H1 (cell line): ENCODE measurements at regions of chr3 and their contacts with region 1.

Region 1: DNA sequence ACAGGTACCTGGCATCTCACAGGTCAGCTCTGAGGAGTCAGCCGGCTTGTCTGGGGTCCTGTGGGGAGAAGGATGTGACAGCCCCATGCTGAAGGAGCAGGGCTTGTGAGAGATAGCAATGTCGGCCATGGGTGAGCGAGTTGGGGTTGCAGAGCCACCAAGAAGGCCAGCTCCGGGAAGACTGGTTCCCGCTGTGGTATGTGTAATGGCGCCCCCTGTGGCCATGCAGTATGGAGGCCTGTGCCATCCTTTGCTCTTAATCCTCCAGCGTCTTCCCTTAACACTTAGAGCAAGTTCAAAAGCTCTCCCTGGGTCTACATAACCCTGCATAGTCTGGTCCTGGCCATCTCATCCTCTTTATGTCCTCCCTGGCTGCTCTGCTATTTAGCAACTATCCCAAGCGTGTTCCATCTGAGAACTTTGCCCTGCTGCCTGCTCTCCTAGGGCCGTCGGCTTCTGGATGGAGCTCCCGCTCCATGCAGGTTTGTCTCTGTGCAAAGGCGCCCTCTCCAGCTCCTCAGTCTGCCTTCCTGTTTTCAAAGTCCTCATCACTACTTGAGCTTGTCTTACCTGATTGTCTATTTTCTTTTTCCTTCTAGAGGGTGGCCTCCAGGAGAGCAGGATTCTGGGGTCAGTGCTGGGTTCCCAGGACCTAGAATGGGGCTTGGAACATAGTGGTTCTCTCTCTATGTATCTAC is 40.8 kb upstream of the IQCF6 start:
- DNase-seq: peak; percentile 43 to 87
- H3K4me3 ChIP-seq: no peak overlapping the region
- H3K27ac ChIP-seq: no peak overlapping the region
- H3K4me1 ChIP-seq: no peaks in the 10 kb centered on the region
- H3K27me3 ChIP-seq: no peaks in the 10 kb centered on the region
- CTCF ChIP-seq: peak; percentile 74 to 96 (median 86)
- EP300 ChIP-seq: no peak
- POLR2A ChIP-seq: no peak
- RAD21 ChIP-seq: peak; percentile 60 to 71

Region 2: GRCh38 chr3:51706788-51707731 is 112.8 kb before region 1 on chr3 and contains the start of gene GRM2:
- CTCF ChIA-PET with region 1: interaction called, 10 read pairs
- POLR2A ChIA-PET with region 1: no interaction called
- DNase-seq: peak; percentile 53 to 90
- H3K4me3 ChIP-seq: peak within 1 kb of the TSS; percentile 49 to 79 (median 74)
- H3K27ac ChIP-seq: no peak within 1 kb of the TSS
- H3K4me1 ChIP-seq: peaks cover 0 to 34% (median 22%) of the 10 kb centered on the region in 4 experiments; a peak in 6 of 7 replicates
- H3K27me3 ChIP-seq: peaks cover 13 to 24% (median 23%) of the 10 kb centered on the region in 4 experiments; a peak in 6 of 7 replicates
- CTCF ChIP-seq: no peak; a peak in 1 of 4 replicates
- EP300 ChIP-seq: peak in 1 of 2 experiments; percentile 37; a peak in 1 of 3 replicates
- POLR2A ChIP-seq: peak in 1 of 2 experiments; percentile 46; a peak in 1 of 3 replicates
- RAD21 ChIP-seq: peak; percentile 4 to 16; a peak in 1 of 4 replicates
- total RNA-seq, gene GRM2: 3.9 and 4.3 TPM in 2 replicates

Region 3: GRCh38 chr3:51799879-51800749 is 19.7 kb before region 1 on chr3:
- CTCF ChIA-PET with region 1: interaction called, 80 read pairs
- POLR2A ChIA-PET with region 1: no interaction called
- DNase-seq: peak in 1 of 2 experiments; percentile 52
- H3K4me3 ChIP-seq: no peak overlapping the region
- H3K27ac ChIP-seq: no peak overlapping the region
- H3K4me1 ChIP-seq: peaks cover 6 to 24% (median 20%) of the 10 kb centered on the region in 4 experiments; a peak in 6 of 7 replicates
- H3K27me3 ChIP-seq: no peaks in the 10 kb centered on the region
- CTCF ChIP-seq: peak in 2 of 3 experiments; percentile 73; a peak in 3 of 4 replicates
- EP300 ChIP-seq: no peak
- POLR2A ChIP-seq: no peak
- RAD21 ChIP-seq: peak; percentile 81 to 83

Region 4: DNA sequence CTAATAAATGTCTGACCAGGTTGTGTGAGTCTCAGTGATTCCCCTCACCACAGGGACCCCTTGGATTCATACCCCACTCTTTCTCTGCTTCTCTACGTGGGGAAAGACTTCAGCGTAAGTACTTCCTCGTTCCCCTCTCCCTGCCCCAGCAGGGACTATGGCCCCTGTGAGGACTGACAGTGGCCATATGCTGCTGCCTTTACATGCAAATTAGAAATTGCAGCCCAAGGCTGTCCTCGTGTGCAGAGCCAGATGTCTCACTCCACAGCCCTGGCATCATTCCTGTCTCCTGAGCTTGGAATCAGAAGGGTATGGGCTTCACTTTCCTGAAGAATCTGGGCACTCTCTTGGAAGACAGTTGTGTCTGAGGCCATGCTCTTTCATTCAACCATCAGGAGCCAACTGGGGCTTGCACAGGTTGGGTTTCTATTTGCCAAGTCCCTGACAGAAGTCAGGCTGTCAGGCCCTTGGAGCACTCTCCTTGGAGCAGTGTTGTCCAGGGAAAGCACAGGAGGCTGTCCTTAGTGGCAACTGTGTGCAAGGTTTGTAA is 11.1 kb after region 1 on chr3:
- CTCF ChIA-PET with region 1: interaction called, 15 read pairs
- POLR2A ChIA-PET with region 1: interaction called, 4 read pairs
- DNase-seq: no peak
- H3K4me3 ChIP-seq: no peak overlapping the region
- H3K27ac ChIP-seq: no peak overlapping the region
- H3K4me1 ChIP-seq: no peaks in the 10 kb centered on the region
- H3K27me3 ChIP-seq: no peaks in the 10 kb centered on the region; a peak in 1 of 7 replicates
- CTCF ChIP-seq: no peak
- EP300 ChIP-seq: no peak
- POLR2A ChIP-seq: no peak
- RAD21 ChIP-seq: no peak

Region 5: GRCh38 chr3:51836606-51837005 is 16.7 kb after region 1 on chr3:
- CTCF ChIA-PET with region 1: interaction called, 15 read pairs
- POLR2A ChIA-PET with region 1: no interaction called
- DNase-seq: no peak
- H3K4me3 ChIP-seq: no peak overlapping the region
- H3K27ac ChIP-seq: no peak overlapping the region
- H3K4me1 ChIP-seq: no peaks in the 10 kb centered on the region
- H3K27me3 ChIP-seq: peaks cover 0 to 1% (median 0%) of the 10 kb centered on the region in 4 experiments; a peak in 1 of 7 replicates
- CTCF ChIP-seq: no peak
- EP300 ChIP-seq: no peak
- POLR2A ChIP-seq: no peak
- RAD21 ChIP-seq: no peak

Region 6: GRCh38 chr3:51845129-51845528 is 25.3 kb after region 1 on chr3:
- CTCF ChIA-PET with region 1: interaction called, 18 read pairs
- POLR2A ChIA-PET with region 1: no interaction called
- DNase-seq: peak in 1 of 2 experiments; percentile 34
- H3K4me3 ChIP-seq: no peak overlapping the region
- H3K27ac ChIP-seq: no peak overlapping the region
- H3K4me1 ChIP-seq: peaks cover 0 to 3% (median 0%) of the 10 kb centered on the region in 4 experiments; a peak in 3 of 7 replicates
- H3K27me3 ChIP-seq: no peaks in the 10 kb centered on the region
- CTCF ChIP-seq: no peak
- EP300 ChIP-seq: no peak
- POLR2A ChIP-seq: no peak
- RAD21 ChIP-seq: peak in 1 of 2 experiments; percentile 1; a peak in 1 of 4 replicates

Region 7: GRCh38 chr3:51967384-51968169 is 147.7 kb after region 1 on chr3 and contains the start of gene PCBP4:
- CTCF ChIA-PET with region 1: no interaction called
- POLR2A ChIA-PET with region 1: no interaction called
- DNase-seq: peak in 1 of 2 experiments; percentile 77
- H3K4me3 ChIP-seq: peak within 1 kb of the TSS; percentile 57 to 90 (median 73)
- H3K27ac ChIP-seq: peak within 1 kb of the TSS; percentile 54
- H3K4me1 ChIP-seq: peaks cover 12 to 42% (median 33%) of the 10 kb centered on the region in 4 experiments
- H3K27me3 ChIP-seq: peaks cover 0 to 13% (median 2%) of the 10 kb centered on the region in 4 experiments; a peak in 5 of 7 replicates
- CTCF ChIP-seq: no peak
- EP300 ChIP-seq: no peak
- POLR2A ChIP-seq: no peak
- RAD21 ChIP-seq: no peak
- total RNA-seq, gene PCBP4: 16.4 and 19.6 TPM in 2 replicates

Region 8: GRCh38 chr3:52181543-52181942 is 361.7 kb after region 1 on chr3:
- CTCF ChIA-PET with region 1: no interaction called
- POLR2A ChIA-PET with region 1: no interaction called
- DNase-seq: no peak
- H3K4me3 ChIP-seq: no peak overlapping the region
- H3K27ac ChIP-seq: no peak overlapping the region
- H3K4me1 ChIP-seq: peaks cover 0 to 2% (median 0%) of the 10 kb centered on the region in 4 experiments; a peak in 2 of 7 replicates
- H3K27me3 ChIP-seq: no peaks in the 10 kb centered on the region
- CTCF ChIP-seq: no peak
- EP300 ChIP-seq: no peak
- POLR2A ChIP-seq: no peak
- RAD21 ChIP-seq: no peak